ENCODE measurements at regions of chr12 and their contacts with region 1.

Region 1: GRCh38 chr12:71415336-71416231 is 24.0 kb upstream of the LGR5 start:
- DNase-seq: no peak
- H3K4me3 ChIP-seq: no peak overlapping the region
- H3K27ac ChIP-seq: no peak overlapping the region
- H3K4me1 ChIP-seq: no peaks in the 10 kb centered on the region
- H3K27me3 ChIP-seq: no peaks in the 10 kb centered on the region
- CTCF ChIP-seq: peak in 1 of 3 donors; percentile 45
- EP300 ChIP-seq: no peak
- POLR2A ChIP-seq: no peak

Region 2: GRCh38 chr12:71746983-71747611 is 331.5 kb after region 1 on chr12:
- intact Hi-C with region 1: loop called in 1 of 4 experiments (anchors 5 kb)
- DNase-seq: peak in 3 of 5 donors; percentile 23 to 36 (median 31)
- H3K4me3 ChIP-seq: no peak overlapping the region
- H3K27ac ChIP-seq: no peak overlapping the region
- H3K4me1 ChIP-seq: no peaks in the 10 kb centered on the region
- H3K27me3 ChIP-seq: no peaks in the 10 kb centered on the region
- CTCF ChIP-seq: peak; percentile 33 to 64 (median 56)
- EP300 ChIP-seq: no peak
- POLR2A ChIP-seq: no peak